ENCODE measurements at regions of chr17 and their contacts with region 1.

Region 1: GRCh38 chr17:49556223-49556971 is 19.3 kb upstream of the NXPH3 start:
- H3K4me3 ChIP-seq: no peak overlapping the region
- H3K27ac ChIP-seq: peak overlapping the region; percentile 12; the same call in 1 of the 2 replicates
- H3K4me1 ChIP-seq: 0 out of 2 replicates have a peak, but pooled peaks cover 2% of the 10 kb centered on the region
- CTCF ChIP-seq: peak; percentile 97

Region 2: GRCh38 chr17:49337884-49338283 is 218.5 kb before region 1 on chr17:
- CTCF ChIA-PET with region 1: interaction called, 17 read pairs
- POLR2A ChIA-PET with region 1: no interaction called
- H3K4me3 ChIP-seq: no peak overlapping the region
- H3K27ac ChIP-seq: no peak overlapping the region
- H3K4me1 ChIP-seq: peaks cover 20% of the 10 kb centered on the region
- CTCF ChIP-seq: no peak

Region 3: GRCh38 chr17:49407981-49408501 is 148.4 kb before region 1 on chr17:
- CTCF ChIA-PET with region 1: interaction called, 174 read pairs
- POLR2A ChIA-PET with region 1: interaction called, 5 read pairs
- H3K4me3 ChIP-seq: no peak overlapping the region
- H3K27ac ChIP-seq: no peak overlapping the region
- H3K4me1 ChIP-seq: no peaks in the 10 kb centered on the region; the same call in 1 of the 2 replicates
- CTCF ChIP-seq: peak; percentile 99

Region 4: DNA sequence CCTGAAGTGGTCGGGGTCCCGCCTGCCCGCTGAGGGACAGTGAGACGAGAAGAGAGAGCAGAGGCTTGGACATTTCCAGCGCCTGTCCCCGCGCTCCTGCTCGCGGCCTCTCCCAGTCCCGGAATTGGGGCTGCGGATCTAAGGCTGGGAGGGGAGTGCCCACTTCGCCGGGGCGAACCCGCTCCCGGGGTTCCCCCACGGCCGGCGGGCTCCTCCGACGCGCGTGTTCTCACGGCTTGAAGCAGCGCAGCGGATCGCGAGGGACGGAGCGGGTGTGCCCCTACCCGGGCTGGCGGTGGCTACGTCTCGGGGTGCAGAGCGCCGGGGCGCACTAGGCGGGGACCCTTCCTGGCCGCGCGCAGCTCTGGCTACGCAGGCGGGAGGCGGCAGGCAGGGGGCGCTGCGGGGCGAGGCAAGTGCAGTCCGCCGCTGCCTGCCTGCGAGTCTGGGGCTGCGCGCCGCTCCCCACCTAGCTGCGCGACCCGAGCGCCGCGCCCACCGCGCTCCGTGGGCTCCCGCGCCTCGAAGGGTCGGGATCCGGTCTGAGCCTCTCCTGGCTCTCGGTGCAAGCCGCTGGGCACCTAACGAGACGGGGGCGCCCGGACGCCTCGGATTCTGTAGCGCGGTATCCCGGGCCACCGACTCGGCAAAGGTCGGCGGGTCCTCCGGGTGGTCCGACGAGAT is 60.1 kb before region 1 on chr17:
- CTCF ChIA-PET with region 1: interaction called, 44 read pairs
- POLR2A ChIA-PET with region 1: interaction called, 4 read pairs
- H3K4me3 ChIP-seq: peak overlapping the region; percentile 51
- H3K27ac ChIP-seq: peak overlapping the region; percentile 27; the same call in 1 of the 2 replicates
- H3K4me1 ChIP-seq: peaks cover 13% of the 10 kb centered on the region
- CTCF ChIP-seq: peak; percentile 85

Region 5: DNA sequence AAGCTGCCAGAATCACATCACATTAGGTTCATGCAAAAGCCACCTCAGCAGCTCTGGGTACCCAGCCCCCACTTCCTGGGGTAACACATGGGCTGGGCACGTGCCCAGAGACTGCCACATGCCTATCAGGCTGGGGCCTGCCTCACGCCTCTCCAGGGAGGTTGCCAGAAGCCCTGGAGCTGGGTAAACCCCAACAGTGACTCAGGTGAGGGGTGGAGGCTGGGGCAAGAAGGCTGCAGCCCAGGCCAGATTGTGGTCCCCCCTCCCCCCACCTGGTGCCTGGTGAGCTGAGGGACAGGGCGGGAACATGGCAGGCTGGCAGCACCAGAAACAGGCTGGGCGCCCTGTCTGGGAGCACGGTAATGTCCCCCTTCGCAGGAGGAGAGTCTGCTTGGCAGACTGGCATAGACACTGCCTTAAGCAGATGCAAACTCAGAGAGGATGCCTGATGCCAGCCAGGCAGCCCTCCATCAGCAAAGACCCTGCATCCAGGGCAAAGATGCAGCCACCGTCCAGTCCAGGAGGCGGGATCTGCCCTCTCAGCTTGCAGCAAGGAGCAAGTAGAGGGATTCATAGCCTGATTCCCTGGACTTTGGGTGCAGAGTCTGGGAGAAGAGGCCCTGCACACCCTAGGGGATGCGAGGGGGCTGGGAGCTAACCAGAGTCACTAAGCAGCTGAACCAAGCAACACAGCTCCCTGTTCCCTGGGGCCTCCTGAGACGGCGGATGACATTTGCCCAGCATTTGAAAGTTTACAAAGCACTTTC is 32.5 kb before region 1 on chr17:
- CTCF ChIA-PET with region 1: interaction called, 27 read pairs
- POLR2A ChIA-PET with region 1: no interaction called
- H3K4me3 ChIP-seq: no peak overlapping the region
- H3K27ac ChIP-seq: no peak overlapping the region
- H3K4me1 ChIP-seq: no peaks in the 10 kb centered on the region
- CTCF ChIP-seq: no peak

Region 6: GRCh38 chr17:49694847-49695683 is 138.7 kb after region 1 on chr17:
- CTCF ChIA-PET with region 1: interaction called, 121 read pairs
- POLR2A ChIA-PET with region 1: no interaction called
- H3K4me3 ChIP-seq: no peak overlapping the region
- H3K27ac ChIP-seq: no peak overlapping the region
- H3K4me1 ChIP-seq: no peaks in the 10 kb centered on the region
- CTCF ChIP-seq: peak; percentile 48